Heart left ventricle (tissue), 16 donors: ENCODE measurements at regions of chr3 and their contacts with region 1.

Region 1: DNA sequence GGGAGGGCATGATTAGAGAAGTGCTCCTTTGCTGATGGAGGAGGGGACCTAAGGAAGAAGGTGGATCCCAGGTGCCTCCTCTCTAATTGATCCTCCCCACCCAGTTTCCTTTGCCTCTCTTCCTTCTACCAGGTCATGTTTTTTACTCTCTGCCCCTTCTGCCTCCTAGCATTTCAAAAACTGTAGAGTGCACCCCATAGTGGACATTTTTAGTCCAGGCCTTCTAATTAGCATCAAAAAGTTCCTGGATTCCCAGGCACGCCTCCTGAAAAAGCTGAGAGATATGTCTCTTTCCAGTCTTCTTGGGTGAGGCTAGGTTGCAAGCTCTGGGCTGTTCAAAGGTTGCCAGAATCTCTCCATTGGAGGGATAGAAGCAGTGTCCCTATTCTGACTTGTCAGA is 18.7 kb upstream of the ITGB5 start:
- DNase-seq: no peak
- ATAC-seq: no peak
- H3K4me3 ChIP-seq: no peak overlapping the region
- H3K27ac ChIP-seq: no peak overlapping the region
- H3K4me1 ChIP-seq: peaks cover 0 to 8% (median under 1%) of the 10 kb centered on the region in 12 donors
- H3K27me3 ChIP-seq: no peaks in the 10 kb centered on the region
- CTCF ChIP-seq: no peak
- POLR2A ChIP-seq: no peak

Region 2: DNA sequence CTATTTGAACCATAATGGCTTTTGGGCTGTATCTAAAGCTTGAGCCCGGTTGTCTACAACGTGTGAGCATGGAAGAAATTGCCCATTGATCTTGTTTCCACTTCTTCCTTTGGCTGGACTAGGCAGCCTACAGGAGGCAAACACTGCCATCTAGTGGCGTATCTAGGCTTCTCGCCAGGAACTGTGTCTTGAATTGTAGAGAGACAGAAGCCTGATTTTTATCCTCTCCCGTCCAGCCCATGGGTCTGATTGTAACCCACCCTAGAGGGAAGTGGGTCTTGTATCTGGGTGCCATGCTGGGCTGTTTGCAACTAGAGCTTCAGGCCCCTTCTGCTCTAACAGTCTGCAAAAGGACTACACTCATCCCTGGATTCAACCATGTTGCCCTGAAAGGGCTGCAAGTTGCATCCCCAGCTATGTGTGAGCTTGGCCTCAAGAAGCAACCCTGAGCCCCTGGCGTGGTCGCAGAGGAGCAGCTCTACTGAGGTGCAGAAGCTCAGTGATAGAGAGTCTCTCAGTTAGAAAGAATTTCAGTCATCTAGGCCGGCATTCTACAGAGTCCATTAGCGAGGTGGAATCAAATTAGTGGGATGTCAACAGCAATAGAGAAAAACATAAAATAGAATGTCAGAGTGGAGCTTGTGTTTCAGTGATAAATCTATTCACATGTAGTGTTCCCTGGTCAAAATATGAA is 345.8 kb before region 1 on chr3:
- intact Hi-C with region 1: loop called in 7 of 10 experiments (anchors 5 to 10 kb)
- DNase-seq: peak in 4 of 5 donors; percentile 50 to 69 (median 64)
- ATAC-seq: peak; percentile 57 to 79 (median 71)
- H3K4me3 ChIP-seq: no peak overlapping the region
- H3K27ac ChIP-seq: peak overlapping the region in 5 of 12 donors; percentile 17 to 41 (median 20)
- H3K4me1 ChIP-seq: peaks cover 4 to 38% (median 17%) of the 10 kb centered on the region in 12 donors
- H3K27me3 ChIP-seq: no peaks in the 10 kb centered on the region
- CTCF ChIP-seq: peak; percentile 80 to 94 (median 88)
- POLR2A ChIP-seq: no peak

Region 3: GRCh38 chr3:124576565-124577493 is 329.0 kb before region 1 on chr3:
- intact Hi-C with region 1: loop called in 1 of 10 experiments (anchors 10 kb)
- DNase-seq: no peak
- ATAC-seq: peak; percentile 70 to 81 (median 74)
- H3K4me3 ChIP-seq: no peak overlapping the region
- H3K27ac ChIP-seq: peak overlapping the region in 3 of 12 donors; percentile 18 to 24 (median 21)
- H3K4me1 ChIP-seq: peaks cover 0 to 16% (median 5%) of the 10 kb centered on the region in 12 donors
- H3K27me3 ChIP-seq: no peaks in the 10 kb centered on the region
- CTCF ChIP-seq: peak in 8 of 12 donors; percentile 7 to 40 (median 24)
- POLR2A ChIP-seq: no peak

Region 4: GRCh38 chr3:124761250-124761796 is 144.5 kb before region 1 on chr3:
- intact Hi-C with region 1: loop called in 9 of 10 experiments (anchors 1 to 2 kb)
- DNase-seq: peak; percentile 84 to 92 (median 87)
- ATAC-seq: peak; percentile 90 to 93 (median 92)
- H3K4me3 ChIP-seq: peak overlapping the region in 1 of 12 donors; percentile 18
- H3K27ac ChIP-seq: peak overlapping the region in 9 of 12 donors; percentile 12 to 73 (median 51)
- H3K4me1 ChIP-seq: peaks cover 0 to 18% (median 9%) of the 10 kb centered on the region in 12 donors
- H3K27me3 ChIP-seq: no peaks in the 10 kb centered on the region
- CTCF ChIP-seq: peak; percentile 95 to 98 (median 97)
- POLR2A ChIP-seq: peak in 1 of 2 donors; percentile 24

Region 5: GRCh38 chr3:124772081-124772831 is 133.6 kb before region 1 on chr3:
- intact Hi-C with region 1: no loop called
- DNase-seq: peak in 4 of 5 donors; percentile 62 to 73 (median 66)
- ATAC-seq: peak; percentile 35 to 60 (median 49)
- H3K4me3 ChIP-seq: no peak overlapping the region
- H3K27ac ChIP-seq: peak overlapping the region; percentile 22 to 76 (median 70)
- H3K4me1 ChIP-seq: peaks cover 14 to 85% (median 59%) of the 10 kb centered on the region in 12 donors
- H3K27me3 ChIP-seq: no peaks in the 10 kb centered on the region
- CTCF ChIP-seq: no peak
- POLR2A ChIP-seq: no peak

Region 6: GRCh38 chr3:124786441-124787241 is 119.2 kb before region 1 on chr3:
- intact Hi-C with region 1: loop called in 3 of 10 experiments (anchors 1 to 2 kb)
- DNase-seq: no peak
- ATAC-seq: peak in 3 of 4 donors; percentile 22 to 67 (median 57)
- H3K4me3 ChIP-seq: no peak overlapping the region
- H3K27ac ChIP-seq: peak overlapping the region; percentile 48 to 84 (median 74)
- H3K4me1 ChIP-seq: peaks cover 9 to 87% (median 67%) of the 10 kb centered on the region in 12 donors
- H3K27me3 ChIP-seq: no peaks in the 10 kb centered on the region
- CTCF ChIP-seq: peak in 11 of 12 donors; percentile 17 to 62 (median 46)
- POLR2A ChIP-seq: no peak